ENCODE measurements at regions of chr3 and their contacts with region 1.

Region 1: DNA sequence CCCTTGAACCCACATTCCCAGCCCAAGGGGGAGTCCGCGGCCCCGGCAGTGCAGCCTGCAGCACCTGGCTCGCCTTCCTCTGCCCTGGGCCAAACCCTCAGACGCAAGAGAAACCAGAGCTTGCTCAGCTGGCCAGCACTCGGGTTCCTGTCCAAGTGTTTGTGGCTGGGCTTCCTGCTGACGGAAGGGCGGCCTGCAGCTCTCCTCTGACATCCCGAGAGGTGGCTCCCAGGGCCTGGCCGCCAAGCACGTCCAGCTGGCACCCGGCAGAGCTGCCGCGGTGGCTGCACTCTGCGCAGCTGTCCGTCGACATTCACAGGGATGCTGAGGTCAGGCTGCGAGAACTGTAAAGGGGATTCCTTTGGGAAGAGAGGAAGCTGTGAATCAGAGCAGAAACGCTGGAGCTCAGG is 85.6 kb downstream of the CPN2 start:
- DNase-seq: peak in 2 of 3 donors; percentile 40 to 53
- H3K4me3 ChIP-seq: peak overlapping the region in 3 of 7 experiments; percentile 16 to 55 (median 36)
- H3K27ac ChIP-seq: no peak overlapping the region
- H3K4me1 ChIP-seq: peaks cover 0 to 50% (median 20%) of the 10 kb centered on the region in 4 experiments
- H3K27me3 ChIP-seq: no peaks in the 10 kb centered on the region

Region 2: DNA sequence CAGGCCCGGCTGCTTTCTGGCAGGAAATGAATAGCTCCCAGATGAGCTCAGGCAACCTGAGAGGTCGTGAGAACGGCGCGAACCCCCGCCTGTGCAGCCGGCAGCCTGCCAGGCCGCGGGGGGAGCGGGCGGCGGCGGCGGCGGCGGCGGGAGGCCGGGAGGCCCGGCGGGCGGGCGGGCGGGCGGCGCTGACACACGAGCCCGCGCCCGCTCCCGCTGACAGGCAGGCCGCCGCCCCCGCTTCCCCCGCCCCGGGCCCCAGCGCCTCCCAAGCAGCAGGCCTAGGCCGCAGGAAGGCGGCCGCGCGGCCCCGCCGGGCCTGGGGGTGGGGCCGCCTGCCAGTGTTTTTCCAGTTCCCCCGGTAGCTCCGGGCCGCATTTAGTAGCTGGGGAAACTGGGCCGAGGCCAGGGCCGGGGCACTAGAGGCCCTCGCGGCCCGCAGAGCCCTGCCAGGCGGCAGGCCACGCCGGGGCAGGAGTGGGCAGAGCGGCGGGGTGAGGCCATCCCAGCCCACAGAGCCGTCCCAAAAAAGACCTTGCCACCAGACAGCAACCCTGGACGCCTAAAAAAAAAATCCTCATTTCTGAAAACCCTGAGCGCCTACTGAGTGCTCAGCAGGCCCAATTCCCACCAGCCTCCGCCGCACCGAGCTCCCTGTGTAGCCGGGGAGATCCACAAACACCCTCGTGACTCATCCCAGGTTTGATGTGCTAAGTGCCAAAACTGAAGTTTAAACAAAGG is 123.9 kb before region 1 on chr3:
- CTCF ChIA-PET with region 1: interaction called, 4 read pairs
- POLR2A ChIA-PET with region 1: interaction called, 10 read pairs
- DNase-seq: peak; percentile 64 to 84 (median 79)
- H3K4me3 ChIP-seq: peak overlapping the region in 6 of 7 experiments; percentile 44 to 70 (median 57)
- H3K27ac ChIP-seq: peak overlapping the region in 1 of 2 experiments; percentile 81
- H3K4me1 ChIP-seq: peaks cover 21 to 61% (median 55%) of the 10 kb centered on the region in 4 experiments
- H3K27me3 ChIP-seq: peaks cover 0 to 32% (median 0%) of the 10 kb centered on the region in 5 experiments

Region 3: GRCh38 chr3:194255252-194256039 is 10.0 kb before region 1 on chr3:
- CTCF ChIA-PET with region 1: interaction called, 11 read pairs
- POLR2A ChIA-PET with region 1: interaction called, 9 read pairs
- DNase-seq: peak; percentile 83 to 92 (median 87)
- H3K4me3 ChIP-seq: peak overlapping the region in 4 of 7 experiments; percentile 10 to 57 (median 38)
- H3K27ac ChIP-seq: peak overlapping the region in 1 of 2 experiments; percentile 73
- H3K4me1 ChIP-seq: peaks cover 7 to 60% (median 38%) of the 10 kb centered on the region in 4 experiments
- H3K27me3 ChIP-seq: no peaks in the 10 kb centered on the region

Region 4: DNA sequence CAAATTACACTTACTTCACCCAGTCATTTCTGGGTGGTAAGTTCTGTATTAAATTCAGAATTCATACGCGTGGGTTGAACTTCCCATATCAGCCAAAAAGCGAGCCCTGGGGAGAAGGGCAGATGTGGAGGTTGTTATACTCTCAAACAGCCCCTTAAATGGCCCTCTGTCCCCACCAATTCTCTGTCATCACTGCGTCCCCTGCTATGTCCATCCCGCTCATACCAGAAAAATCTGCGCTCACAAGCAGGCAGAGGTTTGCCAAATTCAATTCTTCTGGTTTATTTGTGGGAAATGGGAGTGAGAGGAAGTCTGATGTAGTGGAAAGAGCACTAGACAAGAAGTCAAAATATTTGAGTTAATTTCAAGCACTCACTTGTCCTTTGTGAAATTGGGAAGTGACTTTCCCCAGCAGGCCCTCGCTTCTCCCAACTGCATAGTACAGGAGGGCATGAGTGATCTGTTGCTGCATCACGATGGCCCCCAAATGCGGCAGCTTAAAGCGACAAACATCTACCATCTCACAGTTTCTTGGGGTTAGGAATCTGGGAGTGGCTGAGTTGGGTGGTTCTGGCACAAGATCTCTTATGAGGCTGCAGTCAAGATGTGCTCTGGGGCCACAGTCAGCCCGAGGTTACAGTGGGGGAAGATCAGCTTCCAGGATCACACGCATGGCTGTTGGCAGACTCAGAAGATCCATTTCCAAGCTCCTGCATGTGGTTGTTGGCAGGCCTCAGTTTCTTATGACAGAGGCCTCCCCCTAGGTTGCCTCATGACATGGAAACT is 17.9 kb after region 1 on chr3:
- CTCF ChIA-PET with region 1: interaction called, 12 read pairs
- POLR2A ChIA-PET with region 1: no interaction called
- DNase-seq: no peak
- H3K4me3 ChIP-seq: no peak overlapping the region
- H3K27ac ChIP-seq: no peak overlapping the region
- H3K4me1 ChIP-seq: peaks cover 0 to 21% (median 12%) of the 10 kb centered on the region in 4 experiments
- H3K27me3 ChIP-seq: no peaks in the 10 kb centered on the region

Region 5: DNA sequence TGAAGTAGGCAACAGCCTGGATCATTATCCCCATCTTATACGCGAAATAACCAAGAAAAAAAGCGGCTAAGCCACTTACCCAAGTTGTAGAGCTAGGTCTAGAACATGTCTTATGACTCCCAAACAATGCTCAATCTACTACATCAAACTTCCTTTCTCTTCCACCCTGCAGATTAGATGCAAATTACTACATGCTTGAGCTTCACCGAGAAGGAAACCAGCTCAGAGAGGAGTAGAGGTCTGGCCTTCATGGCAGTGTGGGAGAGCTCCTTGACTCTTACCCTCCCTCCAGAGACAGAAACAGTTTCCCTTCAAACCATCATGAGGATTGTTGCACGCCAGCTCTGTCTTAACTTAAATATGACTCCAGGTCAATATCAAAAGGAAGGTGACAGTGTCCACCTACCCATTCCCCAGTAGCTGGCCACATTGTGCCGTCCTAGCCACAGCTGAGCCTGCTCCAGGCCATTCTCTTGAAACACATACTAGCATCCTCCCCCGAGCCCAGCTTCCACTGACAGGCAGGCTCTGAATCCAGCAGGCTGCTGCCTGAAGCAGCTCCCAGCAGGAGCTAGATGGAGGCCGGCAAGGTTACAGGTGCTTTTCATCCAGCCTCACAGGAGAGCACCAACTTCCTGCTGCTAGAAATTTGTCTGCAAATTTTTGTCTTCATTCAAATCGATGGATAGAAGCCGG is 28.9 kb after region 1 on chr3:
- CTCF ChIA-PET with region 1: no interaction called
- POLR2A ChIA-PET with region 1: no interaction called
- DNase-seq: no peak
- H3K4me3 ChIP-seq: no peak overlapping the region
- H3K27ac ChIP-seq: no peak overlapping the region
- H3K4me1 ChIP-seq: peaks cover 0 to 17% (median 11%) of the 10 kb centered on the region in 4 experiments
- H3K27me3 ChIP-seq: peaks cover 0 to 8% (median 0%) of the 10 kb centered on the region in 5 experiments

Region 6: DNA sequence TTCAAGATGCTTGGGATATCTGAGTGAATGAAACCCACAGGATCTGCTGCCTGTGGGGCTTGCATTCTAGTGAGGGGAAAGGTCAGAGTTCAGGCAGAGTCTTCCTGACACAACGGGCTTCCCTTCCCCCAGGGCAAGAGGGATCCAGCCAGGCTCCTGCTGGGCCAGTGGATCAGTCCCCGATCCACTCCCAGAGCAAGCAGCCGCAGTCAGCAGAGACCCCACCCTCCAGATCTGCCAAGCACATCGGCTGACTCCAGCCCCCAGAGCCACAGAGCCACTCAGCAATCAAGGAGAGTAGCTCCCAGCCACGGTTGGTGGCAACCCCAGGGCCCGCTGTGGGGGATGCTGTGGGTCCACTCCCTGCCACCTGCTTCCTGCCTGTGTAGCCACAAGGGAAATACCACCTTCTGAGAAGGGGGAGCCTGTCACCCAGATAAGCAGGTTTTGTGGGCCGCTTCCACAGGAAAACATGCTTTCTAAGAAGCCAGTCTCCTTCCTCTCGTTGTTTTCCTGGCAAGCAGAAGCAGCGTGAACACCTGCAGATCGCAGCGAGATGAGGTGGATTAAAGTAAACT is 40.7 kb after region 1 on chr3:
- CTCF ChIA-PET with region 1: interaction called, 8 read pairs
- POLR2A ChIA-PET with region 1: interaction called, 10 read pairs
- DNase-seq: peak; percentile 98 to 100 (median 99)
- H3K4me3 ChIP-seq: peak overlapping the region in 3 of 7 experiments; percentile 34 to 63 (median 51)
- H3K27ac ChIP-seq: peak overlapping the region; percentile 3 to 74
- H3K4me1 ChIP-seq: peaks cover 17 to 79% (median 57%) of the 10 kb centered on the region in 4 experiments
- H3K27me3 ChIP-seq: peaks cover 0 to 5% (median 1%) of the 10 kb centered on the region in 5 experiments